Upper lobe of right lung (tissue), 1 donor: ENCODE measurements at regions of chr3 and their contacts with region 1.

Region 1: GRCh38 chr3:149393345-149394160 is 16.1 kb upstream of the TM4SF1 start:
- DNase-seq: peak; percentile 83
- ATAC-seq: peak; percentile 96
- H3K4me3 ChIP-seq: no peak overlapping the region
- H3K27ac ChIP-seq: no peak overlapping the region
- H3K4me1 ChIP-seq: peaks cover 28% of the 10 kb centered on the region
- H3K27me3 ChIP-seq: no peaks in the 10 kb centered on the region
- CTCF ChIP-seq: peak; percentile 89

Region 2: GRCh38 chr3:149266736-149267135 is 126.8 kb before region 1 on chr3:
- intact Hi-C with region 1: no loop called
- DNase-seq: no peak
- ATAC-seq: no peak
- H3K4me3 ChIP-seq: no peak overlapping the region
- H3K27ac ChIP-seq: no peak overlapping the region
- H3K4me1 ChIP-seq: no peaks in the 10 kb centered on the region
- H3K27me3 ChIP-seq: no peaks in the 10 kb centered on the region
- CTCF ChIP-seq: no peak

Region 3: DNA sequence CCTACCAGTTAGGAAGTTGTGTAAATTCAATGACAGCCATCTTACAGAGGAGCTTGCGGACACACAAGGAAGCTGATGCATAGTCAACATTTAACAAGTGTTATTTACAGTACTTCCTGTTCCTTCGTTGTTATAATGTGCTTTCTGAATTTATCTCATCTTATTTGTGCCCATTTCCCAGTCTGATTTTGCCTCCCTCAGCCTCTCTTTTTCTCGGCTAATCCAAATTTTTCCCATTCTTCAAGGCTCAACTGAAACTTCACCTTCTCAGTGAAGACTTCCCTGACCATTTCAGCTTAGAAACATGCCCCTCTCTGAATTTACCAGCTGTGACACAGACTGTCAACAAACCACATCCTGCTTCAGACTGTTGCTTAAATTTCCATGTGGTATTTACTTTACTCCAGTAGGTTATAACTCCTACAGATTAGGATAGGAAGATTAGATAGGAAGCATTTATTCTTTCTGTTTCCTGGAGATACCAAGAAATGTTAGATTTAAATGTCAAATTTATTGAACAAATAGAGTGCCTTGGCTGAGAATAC is 116.2 kb before region 1 on chr3:
- intact Hi-C with region 1: no loop called
- DNase-seq: no peak
- ATAC-seq: peak; percentile 72
- H3K4me3 ChIP-seq: no peak overlapping the region
- H3K27ac ChIP-seq: peak overlapping the region; percentile 61
- H3K4me1 ChIP-seq: peaks cover 4% of the 10 kb centered on the region
- H3K27me3 ChIP-seq: no peaks in the 10 kb centered on the region
- CTCF ChIP-seq: no peak

Region 4: GRCh38 chr3:149480325-149481017 is 86.9 kb after region 1 on chr3:
- intact Hi-C with region 1: loop called (anchors 10 kb)
- DNase-seq: peak; percentile 86
- ATAC-seq: peak; percentile 99
- H3K4me3 ChIP-seq: no peak overlapping the region
- H3K27ac ChIP-seq: peak overlapping the region; percentile 69
- H3K4me1 ChIP-seq: peaks cover 22% of the 10 kb centered on the region
- H3K27me3 ChIP-seq: no peaks in the 10 kb centered on the region
- CTCF ChIP-seq: peak; percentile 90